MCF 10A (cell line): ENCODE measurements at regions of chr9 and their contacts with region 1.

Region 1: DNA sequence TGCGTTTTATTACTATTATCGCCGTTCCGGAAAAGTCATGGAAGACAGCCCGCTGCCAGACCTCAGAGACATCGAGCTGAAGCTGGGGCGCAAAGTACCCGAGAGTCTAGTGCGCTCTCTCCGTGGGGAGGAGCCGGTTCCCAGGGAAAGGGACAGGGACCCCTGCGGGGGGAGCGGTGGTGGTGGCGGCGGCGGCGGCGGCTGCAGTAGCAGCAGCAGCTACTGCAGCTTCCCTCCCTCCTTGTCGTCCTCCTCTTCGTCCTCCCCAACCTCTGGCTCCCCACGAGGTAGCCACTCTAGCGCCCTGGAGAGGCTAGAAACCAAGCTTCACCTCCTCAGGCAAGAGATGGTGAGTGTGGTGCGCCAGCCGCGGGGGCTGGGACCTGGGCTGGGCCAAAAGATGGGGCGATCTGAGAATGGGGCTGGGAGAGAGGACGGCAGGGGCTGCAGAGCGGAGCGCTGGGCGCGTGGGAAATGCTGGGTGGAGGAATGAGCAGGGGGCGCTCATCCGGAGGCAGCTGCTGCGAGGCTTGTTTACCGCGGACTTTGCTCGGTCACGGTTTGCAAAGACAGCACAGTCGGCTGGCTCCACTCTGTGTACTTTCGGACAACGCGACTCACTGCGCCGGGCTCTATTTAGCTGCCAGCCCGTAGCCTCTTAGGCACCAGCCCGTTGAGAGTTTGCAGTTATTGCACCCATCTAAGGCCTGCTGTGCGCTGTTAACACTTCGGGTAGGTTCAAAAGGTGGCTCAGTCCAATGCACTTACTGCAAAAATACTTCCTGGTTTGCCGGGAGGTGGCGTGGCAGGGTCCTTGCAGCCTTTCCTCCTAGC is 1.1 kb downstream of the LURAP1L start:
- DNase-seq: peak; percentile 87
- H3K4me3 Mint-ChIP-seq: peak overlapping the region; percentile 99
- H3K27ac Mint-ChIP-seq: peak overlapping the region; percentile 74
- H3K4me1 Mint-ChIP-seq: peaks cover 12% of the 10 kb centered on the region
- H3K27me3 Mint-ChIP-seq: no peaks in the 10 kb centered on the region
- CTCF ChIP-seq: peak; percentile 41

Region 2: DNA sequence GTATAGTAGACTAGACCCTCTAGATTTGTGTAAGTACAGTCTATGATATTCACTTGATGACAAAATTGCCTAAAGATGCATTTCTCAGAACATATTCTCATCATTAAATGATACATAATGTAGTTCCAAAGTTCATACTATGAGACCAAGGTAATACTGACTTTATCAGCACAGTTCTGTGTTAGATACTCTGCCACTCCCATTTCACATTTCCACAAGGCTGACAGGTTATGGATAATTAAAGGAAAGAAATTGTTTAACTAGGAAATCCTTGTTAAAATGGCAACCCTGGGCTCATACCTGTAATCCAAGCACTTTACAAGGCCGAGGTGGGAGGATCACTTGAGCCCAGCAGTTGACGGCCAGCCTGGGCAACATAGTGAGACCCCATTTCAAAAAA is 49.1 kb before region 1 on chr9:
- CTCF ChIA-PET with region 1: interaction called, 131 read pairs
- POLR2A ChIA-PET with region 1: interaction called, 29 read pairs
- intact Hi-C with region 1: loop called (anchors 1 kb)
- DNase-seq: no peak
- H3K4me3 Mint-ChIP-seq: no peak overlapping the region
- H3K27ac Mint-ChIP-seq: no peak overlapping the region
- H3K4me1 Mint-ChIP-seq: peaks cover 23% of the 10 kb centered on the region
- H3K27me3 Mint-ChIP-seq: no peaks in the 10 kb centered on the region
- CTCF ChIP-seq: no peak

Region 3: GRCh38 chr9:12794101-12794799 is 18.4 kb after region 1 on chr9:
- CTCF ChIA-PET with region 1: interaction called, 31 read pairs
- POLR2A ChIA-PET with region 1: interaction called, 85 read pairs
- intact Hi-C with region 1: no loop called
- DNase-seq: peak; percentile 58
- H3K4me3 Mint-ChIP-seq: no peak overlapping the region
- H3K27ac Mint-ChIP-seq: peak overlapping the region; percentile 82
- H3K4me1 Mint-ChIP-seq: peaks cover 46% of the 10 kb centered on the region
- H3K27me3 Mint-ChIP-seq: no peaks in the 10 kb centered on the region
- CTCF ChIP-seq: no peak

Region 4: GRCh38 chr9:12813960-12814876 is 38.3 kb after region 1 on chr9:
- CTCF ChIA-PET with region 1: interaction called, 37 read pairs
- POLR2A ChIA-PET with region 1: interaction called, 242 read pairs
- intact Hi-C with region 1: loop called (anchors 1 kb)
- DNase-seq: peak; percentile 99
- H3K4me3 Mint-ChIP-seq: peak overlapping the region; percentile 71
- H3K27ac Mint-ChIP-seq: peak overlapping the region; percentile 97
- H3K4me1 Mint-ChIP-seq: peaks cover 71% of the 10 kb centered on the region
- H3K27me3 Mint-ChIP-seq: no peaks in the 10 kb centered on the region
- CTCF ChIP-seq: peak; percentile 7

Region 5: DNA sequence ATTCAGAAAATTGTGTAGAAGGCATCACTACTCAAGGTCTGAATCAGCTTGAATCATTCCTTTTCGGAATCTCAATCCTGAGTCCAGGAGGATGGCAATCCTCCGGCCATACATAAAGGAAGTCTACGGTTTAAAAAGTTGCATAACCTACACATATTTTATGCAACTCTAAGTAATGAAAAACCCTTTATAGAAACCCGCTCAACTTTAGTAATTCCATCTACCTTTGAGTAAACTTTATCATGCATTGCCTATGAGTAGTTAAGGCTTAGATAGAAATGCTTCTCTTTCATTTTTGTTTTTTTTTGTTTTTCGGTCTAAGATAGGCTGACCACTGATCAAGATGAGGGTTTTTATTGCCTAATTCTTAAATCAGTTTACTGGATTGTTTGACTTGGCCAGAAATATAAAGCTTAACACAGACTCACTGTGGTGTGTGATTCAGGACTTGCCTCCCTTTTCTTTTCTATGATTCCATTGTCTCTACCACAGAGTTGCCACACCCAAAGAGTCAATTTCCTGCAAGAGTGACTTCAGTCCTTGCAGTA is 83.9 kb after region 1 on chr9:
- CTCF ChIA-PET with region 1: interaction called, 8 read pairs
- POLR2A ChIA-PET with region 1: interaction called, 12 read pairs
- intact Hi-C with region 1: no loop called
- DNase-seq: peak; percentile 90
- H3K4me3 Mint-ChIP-seq: peak overlapping the region; percentile 71
- H3K27ac Mint-ChIP-seq: peak overlapping the region; percentile 86
- H3K4me1 Mint-ChIP-seq: peaks cover 24% of the 10 kb centered on the region
- H3K27me3 Mint-ChIP-seq: no peaks in the 10 kb centered on the region
- CTCF ChIP-seq: no peak

Region 6: DNA sequence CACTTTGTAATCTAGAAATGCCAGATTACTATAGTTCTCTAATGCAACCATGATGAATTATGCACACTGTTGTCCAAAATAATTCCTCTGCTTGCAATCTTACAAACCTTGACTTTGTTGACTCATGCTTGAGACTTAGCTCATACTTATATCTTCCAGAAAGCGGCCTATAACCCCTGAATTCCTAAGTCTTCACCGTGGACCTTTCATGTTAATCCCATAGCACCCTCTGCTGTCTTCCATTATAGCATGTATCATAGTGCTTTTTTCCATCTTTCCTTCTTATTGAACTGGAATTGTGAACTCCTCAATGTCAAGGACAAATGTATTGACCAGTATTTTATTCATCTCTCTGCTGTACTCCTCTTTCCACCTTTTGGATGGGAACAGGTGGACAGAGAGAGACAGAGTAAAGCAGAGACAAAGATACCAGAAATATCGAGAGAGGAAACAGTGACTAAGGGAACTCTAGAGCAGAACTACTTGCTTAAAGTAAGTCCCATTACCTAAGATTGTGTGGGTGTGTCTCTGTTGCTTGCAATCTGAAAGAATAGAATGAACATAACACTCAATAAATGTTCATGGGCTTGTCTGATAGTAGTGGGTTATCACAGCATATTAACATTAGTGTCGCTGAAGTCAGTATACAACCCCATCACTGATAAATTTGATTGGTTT is 109.0 kb after region 1 on chr9:
- CTCF ChIA-PET with region 1: interaction called, 43 read pairs
- POLR2A ChIA-PET with region 1: interaction called, 42 read pairs
- intact Hi-C with region 1: loop called (anchors 1 kb)
- DNase-seq: peak; percentile 84
- H3K4me3 Mint-ChIP-seq: no peak overlapping the region
- H3K27ac Mint-ChIP-seq: no peak overlapping the region
- H3K4me1 Mint-ChIP-seq: peaks cover 13% of the 10 kb centered on the region
- H3K27me3 Mint-ChIP-seq: no peaks in the 10 kb centered on the region
- CTCF ChIP-seq: peak; percentile 62